ENCODE measurements at regions of chr3 and their contacts with region 1.

Region 1: DNA sequence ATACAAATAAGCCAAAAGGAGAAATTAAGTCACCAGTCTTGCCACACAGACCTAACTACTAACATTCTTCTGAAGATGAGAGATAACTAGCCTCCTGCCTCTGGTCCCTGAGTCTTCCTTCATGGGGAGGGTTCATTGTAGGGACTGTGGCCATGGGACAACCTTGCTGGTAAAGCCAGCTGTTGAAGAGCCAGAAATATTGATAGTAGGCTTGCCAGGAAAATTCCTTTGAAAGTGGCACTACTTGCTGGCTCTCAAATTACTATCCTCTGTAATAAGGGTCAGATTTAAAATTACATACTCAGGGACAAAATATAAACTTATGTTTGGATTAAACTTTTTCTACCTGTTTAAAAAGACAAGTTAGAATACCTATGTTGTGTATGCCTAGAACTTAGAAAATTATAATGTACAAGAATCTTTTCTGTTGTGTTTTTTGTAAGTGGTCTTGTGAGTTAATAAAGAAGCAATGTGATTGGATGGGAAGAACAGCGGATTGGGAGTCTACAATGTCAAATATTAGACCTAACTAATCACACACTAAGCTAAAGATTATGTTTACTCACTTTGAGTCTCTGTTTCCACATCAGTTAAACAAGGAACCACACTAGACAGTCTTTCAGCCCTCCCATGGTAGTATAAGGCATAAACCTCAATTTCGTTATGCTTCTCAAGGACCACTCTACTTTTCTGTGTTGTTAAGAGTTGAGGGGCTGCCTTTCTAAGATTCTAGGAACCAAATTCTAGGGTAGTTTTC is 60.0 kb upstream of the TRIM71 start:
- DNase-seq: no peak
- H3K4me3 ChIP-seq: no peak overlapping the region
- H3K27ac ChIP-seq: no peak overlapping the region
- H3K4me1 ChIP-seq: no peaks in the 10 kb centered on the region
- H3K27me3 ChIP-seq: no peaks in the 10 kb centered on the region
- CTCF ChIP-seq: no peak

Region 2: GRCh38 chr3:32531010-32531647 is 226.7 kb before region 1 on chr3:
- CTCF ChIA-PET with region 1: no interaction called
- POLR2A ChIA-PET with region 1: no interaction called
- intact Hi-C with region 1: no loop called
- DNase-seq: no peak
- H3K4me3 ChIP-seq: no peak overlapping the region
- H3K27ac ChIP-seq: no peak overlapping the region
- H3K4me1 ChIP-seq: no peaks in the 10 kb centered on the region
- H3K27me3 ChIP-seq: no peaks in the 10 kb centered on the region
- CTCF ChIP-seq: no peak

Region 3: DNA sequence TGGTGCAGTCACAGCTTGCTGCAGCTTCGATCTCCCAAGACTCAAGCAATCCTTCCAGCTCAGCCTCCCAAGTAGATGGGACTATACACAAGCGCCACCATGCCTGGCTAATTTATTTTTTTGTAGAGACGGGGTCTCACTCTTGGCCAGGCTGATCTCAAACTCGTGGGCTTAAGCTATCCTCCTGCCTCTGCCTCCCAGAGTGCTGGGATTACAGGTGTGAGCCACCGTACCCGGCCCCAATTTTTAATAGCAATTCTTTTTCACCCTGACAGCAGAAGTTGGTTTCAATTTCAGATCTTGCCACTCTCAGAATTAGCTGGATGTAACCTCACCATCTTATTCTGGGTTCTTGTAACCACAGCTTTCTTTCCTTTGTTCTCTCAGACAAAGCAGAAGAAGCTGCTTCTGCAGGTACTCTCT is 124.8 kb after region 1 on chr3:
- CTCF ChIA-PET with region 1: no interaction called
- POLR2A ChIA-PET with region 1: interaction called, 13 read pairs
- intact Hi-C with region 1: no loop called
- DNase-seq: no peak
- H3K4me3 ChIP-seq: no peak overlapping the region
- H3K27ac ChIP-seq: no peak overlapping the region
- H3K4me1 ChIP-seq: no peaks in the 10 kb centered on the region
- H3K27me3 ChIP-seq: no peaks in the 10 kb centered on the region
- CTCF ChIP-seq: no peak

Measured in PC-9 (cell line).